IMR-90 (cell line): ENCODE measurements at regions of chr1 and their contacts with region 1.

Region 1: GRCh38 chr1:111030590-111030989 is 66.9 kb upstream of the LRIF1 start:
- DNase-seq: peak; percentile 60
- ATAC-seq: peak; percentile 87
- H3K4me3 ChIP-seq: no peak overlapping the region
- H3K27ac ChIP-seq: no peak overlapping the region
- H3K4me1 ChIP-seq: no peaks in the 10 kb centered on the region
- H3K27me3 ChIP-seq: no peaks in the 10 kb centered on the region
- CTCF ChIP-seq: peak; percentile 77
- POLR2A ChIP-seq: no peak
- RAD21 ChIP-seq: peak; percentile 40; the same call in 1 of the 2 replicates

Region 2: GRCh38 chr1:110850636-110851035 is 180.0 kb before region 1 on chr1:
- CTCF ChIA-PET with region 1: interaction called, 3 read pairs
- POLR2A ChIA-PET with region 1: no interaction called
- dilution Hi-C with region 1: no loop called
- in situ Hi-C with region 1: no loop called
- intact Hi-C with region 1: loop called (anchors 1 kb)
- DNase-seq: no peak
- ATAC-seq: no peak
- H3K4me3 ChIP-seq: no peak overlapping the region
- H3K27ac ChIP-seq: no peak overlapping the region
- H3K4me1 ChIP-seq: no peaks in the 10 kb centered on the region
- H3K27me3 ChIP-seq: no peaks in the 10 kb centered on the region
- CTCF ChIP-seq: no peak
- POLR2A ChIP-seq: no peak
- RAD21 ChIP-seq: no peak

Region 3: GRCh38 chr1:111334169-111334568 is 303.6 kb after region 1 on chr1:
- CTCF ChIA-PET with region 1: no interaction called
- POLR2A ChIA-PET with region 1: no interaction called
- dilution Hi-C with region 1: no loop called
- in situ Hi-C with region 1: loop called (anchors 25 kb)
- intact Hi-C with region 1: loop called (anchors 1 kb)
- DNase-seq: peak; percentile 49
- ATAC-seq: peak; percentile 75
- H3K4me3 ChIP-seq: no peak overlapping the region
- H3K27ac ChIP-seq: no peak overlapping the region
- H3K4me1 ChIP-seq: no peaks in the 10 kb centered on the region
- H3K27me3 ChIP-seq: peaks cover 4% of the 10 kb centered on the region; the same call in 1 of the 2 replicates
- CTCF ChIP-seq: peak; percentile 83
- POLR2A ChIP-seq: no peak
- RAD21 ChIP-seq: peak; percentile 80

Region 4: DNA sequence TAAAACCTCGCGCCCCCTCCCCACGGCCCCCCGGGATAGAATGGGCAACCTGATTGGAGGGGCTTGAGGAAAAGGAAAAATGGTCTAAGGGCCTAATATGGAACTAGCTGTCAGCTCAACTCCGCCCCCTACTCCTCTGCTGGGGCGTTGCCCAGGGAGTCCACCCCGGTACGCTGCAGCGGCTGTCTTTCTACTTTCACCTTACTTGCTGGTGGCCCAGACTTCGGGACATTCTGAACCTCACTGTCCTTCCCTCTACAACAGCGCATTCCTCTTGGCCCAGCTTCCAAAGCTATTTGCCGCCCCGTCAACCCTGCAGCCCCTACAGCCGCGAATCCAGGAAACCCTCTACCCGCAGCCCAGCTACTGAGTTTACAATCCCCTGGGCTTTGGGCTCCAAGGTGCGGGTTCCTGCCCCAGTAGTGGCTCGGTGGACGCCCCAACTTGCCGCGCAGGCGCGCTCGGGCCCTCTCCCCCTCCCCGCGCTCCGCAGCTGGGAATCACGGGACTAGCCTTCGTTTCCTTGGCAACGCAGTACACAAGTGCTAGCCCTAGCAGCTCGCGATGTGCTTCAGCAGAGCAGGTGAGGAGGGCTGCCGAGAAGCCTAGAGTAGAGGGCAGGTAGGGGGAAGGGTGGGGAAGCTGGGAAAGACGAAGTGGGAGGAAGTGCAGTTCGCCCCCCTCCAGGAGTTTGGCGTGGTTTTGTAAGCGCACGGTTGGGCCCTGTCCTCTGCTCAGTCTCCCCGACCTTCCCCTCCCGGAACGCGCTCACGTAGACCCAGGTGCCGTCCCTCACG is 315.7 kb after region 1 on chr1:
- CTCF ChIA-PET with region 1: no interaction called
- POLR2A ChIA-PET with region 1: no interaction called
- dilution Hi-C with region 1: no loop called
- in situ Hi-C with region 1: loop called (anchors 25 kb)
- intact Hi-C with region 1: no loop called
- DNase-seq: peak; percentile 69
- ATAC-seq: peak; percentile 99
- H3K4me3 ChIP-seq: peak overlapping the region; percentile 62
- H3K27ac ChIP-seq: peak overlapping the region; percentile 1; the same call in 1 of the 2 replicates
- H3K4me1 ChIP-seq: no peaks in the 10 kb centered on the region
- H3K27me3 ChIP-seq: peaks cover 9% of the 10 kb centered on the region
- CTCF ChIP-seq: no peak
- POLR2A ChIP-seq: no peak
- RAD21 ChIP-seq: no peak

Region 5: GRCh38 chr1:111399792-111400610 is 369.4 kb after region 1 on chr1:
- CTCF ChIA-PET with region 1: interaction called, 5 read pairs
- POLR2A ChIA-PET with region 1: no interaction called
- dilution Hi-C with region 1: no loop called
- in situ Hi-C with region 1: no loop called
- intact Hi-C with region 1: loop called (anchors 1 kb)
- DNase-seq: peak; percentile 55
- ATAC-seq: peak; percentile 63
- H3K4me3 ChIP-seq: no peak overlapping the region
- H3K27ac ChIP-seq: no peak overlapping the region
- H3K4me1 ChIP-seq: no peaks in the 10 kb centered on the region
- H3K27me3 ChIP-seq: peaks cover 24% of the 10 kb centered on the region
- CTCF ChIP-seq: peak; percentile 70
- POLR2A ChIP-seq: no peak
- RAD21 ChIP-seq: peak; percentile 72